ENCODE measurements at regions of chr16 and their contacts with region 1.

Region 1: GRCh38 chr16:8330761-8331160 is 259.6 kb downstream of the TMEM114 start:
- DNase-seq: no peak
- ATAC-seq: no peak
- H3K4me3 ChIP-seq: no peak overlapping the region
- H3K27ac ChIP-seq: no peak overlapping the region
- H3K4me1 ChIP-seq: no peaks in the 10 kb centered on the region
- H3K27me3 ChIP-seq: no peaks in the 10 kb centered on the region; a peak in 1 of 5 replicates
- CTCF ChIP-seq: no peak
- EP300 ChIP-seq: no peak
- POLR2A ChIP-seq: no peak
- RAD21 ChIP-seq: no peak

Region 2: GRCh38 chr16:8380311-8380710 is 49.5 kb after region 1 on chr16:
- CTCF ChIA-PET with region 1: no interaction called
- POLR2A ChIA-PET with region 1: no interaction called
- in situ Hi-C with region 1: no loop called
- intact Hi-C with region 1: no loop called
- DNase-seq: no peak
- ATAC-seq: no peak
- H3K4me3 ChIP-seq: no peak overlapping the region
- H3K27ac ChIP-seq: no peak overlapping the region
- H3K4me1 ChIP-seq: no peaks in the 10 kb centered on the region
- H3K27me3 ChIP-seq: peaks cover 0 to 2% of the 10 kb centered on the region in 2 experiments; a peak in 2 of 5 replicates
- CTCF ChIP-seq: no peak
- EP300 ChIP-seq: no peak
- POLR2A ChIP-seq: no peak
- RAD21 ChIP-seq: no peak

Region 3: DNA sequence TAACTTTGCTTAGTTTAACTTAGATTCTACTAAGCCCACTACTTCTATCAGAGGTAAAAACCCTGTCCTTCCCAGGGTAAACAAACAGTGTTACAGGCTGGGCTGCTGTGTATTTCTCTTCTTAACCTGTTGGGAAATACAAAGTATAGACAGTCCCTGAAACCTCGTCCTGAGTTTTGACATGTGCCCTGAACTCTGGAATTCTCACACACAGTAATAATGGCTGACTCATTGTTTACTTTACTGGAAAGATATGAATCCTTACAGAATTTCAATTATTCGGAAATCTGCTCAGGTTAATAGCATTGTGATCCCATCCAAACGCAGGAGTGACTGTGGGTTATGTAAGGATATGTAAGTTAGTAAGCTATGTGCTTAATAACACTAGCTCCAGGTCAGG is 60.5 kb after region 1 on chr16:
- CTCF ChIA-PET with region 1: no interaction called
- POLR2A ChIA-PET with region 1: no interaction called
- in situ Hi-C with region 1: no loop called
- intact Hi-C with region 1: loop called (anchors 10 kb)
- DNase-seq: peak; percentile 64
- ATAC-seq: peak; percentile 93
- H3K4me3 ChIP-seq: no peak overlapping the region
- H3K27ac ChIP-seq: no peak overlapping the region
- H3K4me1 ChIP-seq: peaks cover 7% of the 10 kb centered on the region; the same call in 1 of the 2 replicates
- H3K27me3 ChIP-seq: peaks cover 0 to 7% of the 10 kb centered on the region in 2 experiments; a peak in 1 of 5 replicates
- CTCF ChIP-seq: no peak
- EP300 ChIP-seq: peak in 1 of 2 experiments; percentile 24; a peak in 1 of 4 replicates
- POLR2A ChIP-seq: no peak
- RAD21 ChIP-seq: no peak